ENCODE measurements at regions of chr5 and their contacts with region 1.

Region 1: DNA sequence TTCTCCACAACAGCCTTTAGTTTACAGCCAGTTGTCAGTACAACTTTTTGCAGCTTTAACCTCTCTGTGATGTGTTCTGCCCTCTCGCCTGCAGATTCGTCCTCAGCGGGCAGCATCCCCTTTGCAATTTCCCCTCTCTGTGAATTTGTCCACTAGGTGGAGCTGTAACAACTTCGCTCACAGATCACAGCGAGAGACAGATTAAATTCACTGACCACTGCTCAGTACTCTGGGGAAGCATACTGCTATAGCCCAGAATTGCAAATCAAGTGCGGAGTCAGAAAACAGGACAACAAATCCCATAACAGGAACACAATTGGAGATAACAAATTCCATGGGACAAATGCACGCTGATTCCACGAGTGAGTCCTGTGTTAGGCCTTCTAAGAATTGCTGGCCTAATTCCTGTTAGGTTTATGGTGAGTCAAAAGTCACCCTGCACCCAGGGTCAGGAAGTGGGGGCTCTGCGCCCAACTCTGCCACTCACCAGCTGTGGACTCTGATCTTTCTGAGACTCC is 2124.9 kb downstream of the MAT2B start:
- DNase-seq: peak; percentile 42
- H3K4me3 ChIP-seq: no peak overlapping the region
- H3K27ac ChIP-seq: no peak overlapping the region
- H3K4me1 ChIP-seq: peaks cover 6% of the 10 kb centered on the region
- H3K27me3 ChIP-seq: no peaks in the 10 kb centered on the region
- CTCF ChIP-seq: peak; percentile 55 to 72 (median 62)
- POLR2A ChIP-seq: no peak

Region 2: DNA sequence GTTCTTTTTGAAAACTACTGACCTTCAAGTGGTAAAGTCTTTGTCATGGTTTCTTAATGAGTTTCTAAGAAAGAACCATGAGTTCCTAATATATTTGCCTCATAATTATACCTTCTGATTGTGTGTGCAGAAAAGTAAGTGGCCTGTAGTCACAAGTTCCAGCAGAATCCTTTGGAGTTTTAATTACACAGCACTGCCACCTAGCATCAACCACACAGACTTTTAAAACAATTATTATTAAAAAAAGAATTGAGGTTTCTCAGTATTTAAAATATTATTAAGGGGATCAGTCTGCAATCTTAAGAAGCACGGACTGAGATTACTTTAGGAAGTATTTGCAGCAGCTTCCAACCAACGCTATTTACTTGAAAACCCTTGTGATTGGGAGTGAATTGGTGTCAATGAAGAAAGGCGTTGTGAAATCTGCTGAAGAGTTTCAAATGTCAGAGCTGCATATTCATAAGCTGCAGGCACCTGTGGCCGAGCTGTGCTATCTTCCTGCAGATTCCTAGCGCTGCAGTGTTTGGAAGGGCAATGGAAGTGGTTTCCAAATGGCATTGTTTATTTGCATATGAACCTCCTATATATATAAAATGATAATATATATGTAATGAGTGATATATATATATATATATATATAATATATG is 1586.9 kb after region 1 on chr5:
- intact Hi-C with region 1: loop called (anchors 10 kb)
- DNase-seq: no peak
- H3K4me3 ChIP-seq: no peak overlapping the region
- H3K27ac ChIP-seq: no peak overlapping the region
- H3K4me1 ChIP-seq: no peaks in the 10 kb centered on the region
- H3K27me3 ChIP-seq: no peaks in the 10 kb centered on the region
- CTCF ChIP-seq: peak in 1 of 4 experiments; percentile 16
- POLR2A ChIP-seq: no peak

Measured in prostate gland (tissue), 2 donors.